HCT116 (cell line): ENCODE measurements at regions of chr7 and their contacts with region 1.

Region 1: DNA sequence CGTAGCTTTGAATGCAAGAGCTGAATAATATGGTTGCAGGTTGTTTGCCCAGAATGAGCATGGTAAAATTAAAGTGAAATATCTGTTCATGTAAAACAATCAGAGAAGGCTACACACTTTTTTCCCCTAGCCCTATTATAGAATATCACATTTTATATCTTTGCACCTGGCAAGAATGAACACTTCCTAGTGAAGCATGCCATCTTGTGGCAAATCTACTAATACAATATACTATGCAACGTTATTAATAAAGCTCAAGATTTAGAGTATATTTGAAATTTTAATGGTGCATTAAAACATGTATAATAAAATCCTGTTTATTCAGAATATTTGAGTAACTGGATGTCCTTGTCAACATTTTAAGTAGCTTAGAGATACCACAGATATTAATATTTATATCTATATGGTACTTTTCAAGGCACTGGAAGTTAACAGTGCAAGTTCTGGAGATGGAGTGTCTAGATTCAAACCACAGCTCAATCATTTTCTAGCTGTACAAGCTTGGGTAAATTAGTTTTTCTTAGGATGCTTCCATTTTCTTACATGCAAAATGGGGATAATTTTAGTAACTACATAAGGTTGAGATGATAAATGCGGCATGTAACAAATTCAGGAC is 643.1 kb upstream of the SEMA3D start:
- DNase-seq: no peak
- ATAC-seq: peak; percentile 63
- H3K4me3 ChIP-seq: no peak overlapping the region
- H3K27ac ChIP-seq: no peak overlapping the region
- H3K4me1 ChIP-seq: no peaks in the 10 kb centered on the region
- H3K27me3 ChIP-seq: no peaks in the 10 kb centered on the region
- CTCF ChIP-seq: peak; percentile 12 to 55 (median 49); a peak in 4 of 6 replicates
- POLR2A ChIP-seq: no peak
- RAD21 ChIP-seq: peak; percentile 70

Region 2: GRCh38 chr7:83936056-83936708 is 1893.7 kb before region 1 on chr7:
- CTCF ChIA-PET with region 1: interaction called, 10 read pairs
- POLR2A ChIA-PET with region 1: no interaction called
- RAD21 ChIA-PET with region 1: no interaction called
- intact Hi-C with region 1: no loop called
- DNase-seq: peak; percentile 69
- ATAC-seq: peak; percentile 87
- H3K4me3 ChIP-seq: no peak overlapping the region
- H3K27ac ChIP-seq: no peak overlapping the region
- H3K4me1 ChIP-seq: no peaks in the 10 kb centered on the region
- H3K27me3 ChIP-seq: no peaks in the 10 kb centered on the region
- CTCF ChIP-seq: peak; percentile 81 to 92 (median 89)
- POLR2A ChIP-seq: no peak
- RAD21 ChIP-seq: peak; percentile 91

Region 3: GRCh38 chr7:84985073-84985784 is 844.7 kb before region 1 on chr7:
- CTCF ChIA-PET with region 1: no interaction called
- POLR2A ChIA-PET with region 1: no interaction called
- RAD21 ChIA-PET with region 1: no interaction called
- intact Hi-C with region 1: no loop called
- DNase-seq: no peak
- ATAC-seq: no peak
- H3K4me3 ChIP-seq: no peak overlapping the region
- H3K27ac ChIP-seq: no peak overlapping the region
- H3K4me1 ChIP-seq: no peaks in the 10 kb centered on the region
- H3K27me3 ChIP-seq: no peaks in the 10 kb centered on the region
- CTCF ChIP-seq: 0 out of 6 replicates have a peak, but pooled peaks of 1 of the 3 experiments have one; percentile 13
- POLR2A ChIP-seq: no peak
- RAD21 ChIP-seq: no peak

Region 4: GRCh38 chr7:85030893-85031292 is 799.0 kb before region 1 on chr7:
- CTCF ChIA-PET with region 1: interaction called, 58 read pairs
- POLR2A ChIA-PET with region 1: interaction called, 3 read pairs
- RAD21 ChIA-PET with region 1: interaction called in 1 of 2 experiments, 4 read pairs
- intact Hi-C with region 1: loop called (anchors 1 kb)
- DNase-seq: peak; percentile 26
- ATAC-seq: peak; percentile 67
- H3K4me3 ChIP-seq: no peak overlapping the region
- H3K27ac ChIP-seq: no peak overlapping the region
- H3K4me1 ChIP-seq: no peaks in the 10 kb centered on the region
- H3K27me3 ChIP-seq: no peaks in the 10 kb centered on the region
- CTCF ChIP-seq: peak; percentile 25 to 68 (median 56); a peak in 4 of 6 replicates
- POLR2A ChIP-seq: no peak
- RAD21 ChIP-seq: peak; percentile 66

Region 5: GRCh38 chr7:85041605-85042216 is 788.2 kb before region 1 on chr7:
- CTCF ChIA-PET with region 1: interaction called, 71 read pairs
- POLR2A ChIA-PET with region 1: no interaction called
- RAD21 ChIA-PET with region 1: interaction called, 3 to 7 read pairs
- intact Hi-C with region 1: loop called (anchors 2 kb)
- DNase-seq: peak; percentile 62
- ATAC-seq: peak; percentile 89
- H3K4me3 ChIP-seq: no peak overlapping the region
- H3K27ac ChIP-seq: no peak overlapping the region
- H3K4me1 ChIP-seq: no peaks in the 10 kb centered on the region
- H3K27me3 ChIP-seq: no peaks in the 10 kb centered on the region
- CTCF ChIP-seq: peak; percentile 64 to 87 (median 77)
- POLR2A ChIP-seq: no peak
- RAD21 ChIP-seq: peak; percentile 88

Region 6: DNA sequence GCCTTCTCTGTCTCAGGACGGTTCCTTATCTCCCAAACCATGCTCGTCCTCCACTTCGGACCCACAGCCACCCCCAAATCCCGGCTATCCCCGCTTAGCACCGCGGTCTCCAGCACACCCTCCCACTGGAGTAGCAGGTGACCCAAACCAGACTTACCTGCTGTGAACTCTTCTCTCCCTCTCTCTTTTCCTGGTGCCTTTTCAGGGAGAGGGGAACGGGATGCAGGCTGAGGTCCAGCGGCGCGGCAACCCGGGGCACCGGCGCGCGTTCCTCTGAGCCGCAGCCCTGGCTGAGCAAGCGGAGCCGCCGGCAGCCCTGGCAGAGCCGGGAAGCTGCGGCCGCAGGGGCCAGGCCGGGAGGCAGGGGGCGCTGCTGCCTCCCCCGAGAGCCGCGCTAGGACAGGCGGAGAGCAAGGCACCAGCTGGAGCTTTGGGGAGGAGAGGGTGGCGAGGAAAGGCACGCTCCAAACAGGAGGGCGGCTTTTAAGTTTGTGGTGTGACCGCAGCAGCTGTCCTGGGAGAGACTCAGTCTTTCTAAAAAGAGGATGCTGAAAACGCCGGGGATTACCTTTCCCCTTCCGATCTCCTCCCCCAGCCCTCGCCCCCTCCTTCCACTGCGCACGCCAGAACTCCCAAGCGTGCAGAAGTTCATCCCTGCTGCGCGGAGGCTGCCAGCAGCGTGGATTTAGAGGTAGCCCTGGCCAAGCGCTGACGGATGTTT is 643.2 kb before region 1 on chr7 and contains the start of gene SEMA3D:
- CTCF ChIA-PET with region 1: interaction called, 5 read pairs
- POLR2A ChIA-PET with region 1: no interaction called
- RAD21 ChIA-PET with region 1: no interaction called
- intact Hi-C with region 1: loop called (anchors 10 kb)
- DNase-seq: peak; percentile 48
- ATAC-seq: peak; percentile 97
- H3K4me3 ChIP-seq: peak within 1 kb of the TSS; percentile 62 to 66
- H3K27ac ChIP-seq: no peak within 1 kb of the TSS; the same call in 1 of the 2 replicates
- H3K4me1 ChIP-seq: peaks cover 5 to 8% of the 10 kb centered on the region in 2 experiments; a peak in 3 of 4 replicates
- H3K27me3 ChIP-seq: no peaks in the 10 kb centered on the region
- CTCF ChIP-seq: peak; percentile 44 to 93 (median 82); a peak in 5 of 6 replicates
- POLR2A ChIP-seq: no peak
- RAD21 ChIP-seq: peak; percentile 63
- total RNA-seq, gene SEMA3D: 1.4 TPM

Region 7: DNA sequence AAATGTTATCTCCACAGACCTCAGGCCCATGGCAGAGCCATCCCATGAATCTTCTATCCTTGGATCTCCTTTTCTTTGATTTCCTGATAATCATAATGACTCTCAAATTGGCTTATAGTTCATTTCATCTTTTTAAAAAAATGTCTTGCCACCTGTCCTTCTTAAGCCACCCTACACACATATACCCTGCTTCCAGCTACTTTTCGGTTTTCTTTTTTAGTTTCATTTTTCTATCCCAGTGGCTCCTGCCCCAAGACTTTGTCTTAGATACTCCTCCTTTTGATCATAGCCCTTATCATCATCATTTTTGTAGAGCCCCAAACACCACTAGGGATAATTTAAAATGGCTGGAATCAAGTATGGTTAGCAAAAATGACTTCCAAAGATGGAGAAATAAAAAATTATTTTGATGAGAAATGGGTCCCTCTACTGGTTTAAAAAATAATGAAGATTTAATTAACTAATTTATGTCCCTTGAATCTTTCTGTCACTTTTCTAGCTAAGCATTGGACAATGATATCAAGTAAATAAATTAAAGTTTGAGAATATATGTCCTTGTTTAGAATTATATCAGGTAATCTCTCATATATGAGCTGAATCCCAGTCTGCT is 365.8 kb before region 1 on chr7:
- CTCF ChIA-PET with region 1: interaction called, 8 read pairs
- POLR2A ChIA-PET with region 1: no interaction called
- RAD21 ChIA-PET with region 1: no interaction called
- intact Hi-C with region 1: loop called (anchors 10 kb)
- DNase-seq: no peak
- ATAC-seq: no peak
- H3K4me3 ChIP-seq: no peak overlapping the region
- H3K27ac ChIP-seq: no peak overlapping the region
- H3K4me1 ChIP-seq: no peaks in the 10 kb centered on the region
- H3K27me3 ChIP-seq: no peaks in the 10 kb centered on the region
- CTCF ChIP-seq: peak in 1 of 3 experiments; percentile 26; a peak in 2 of 6 replicates
- POLR2A ChIP-seq: no peak
- RAD21 ChIP-seq: no peak

Region 8: DNA sequence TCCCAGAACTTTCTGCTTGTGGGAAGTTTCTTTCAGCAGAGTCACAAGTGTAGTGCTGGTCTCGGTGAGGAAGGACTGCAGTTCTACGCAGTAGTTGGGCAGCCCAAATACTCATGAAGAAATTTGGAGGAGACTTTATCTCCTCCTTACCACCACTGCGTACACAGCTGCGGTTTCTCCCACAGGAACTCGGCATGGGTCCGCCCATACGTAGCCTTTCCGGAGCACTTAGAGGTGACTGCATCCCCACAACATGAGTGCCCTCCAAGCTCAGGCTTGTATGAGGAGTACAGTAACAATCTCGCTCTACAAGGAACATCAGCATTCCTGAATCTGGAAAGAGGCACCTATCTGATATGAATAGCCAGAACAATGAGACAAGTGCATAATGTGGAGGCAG is 93.8 kb before region 1 on chr7:
- CTCF ChIA-PET with region 1: no interaction called
- POLR2A ChIA-PET with region 1: no interaction called
- RAD21 ChIA-PET with region 1: no interaction called
- intact Hi-C with region 1: no loop called
- DNase-seq: no peak
- ATAC-seq: no peak
- H3K4me3 ChIP-seq: no peak overlapping the region
- H3K27ac ChIP-seq: no peak overlapping the region
- H3K4me1 ChIP-seq: no peaks in the 10 kb centered on the region
- H3K27me3 ChIP-seq: no peaks in the 10 kb centered on the region
- CTCF ChIP-seq: no peak
- POLR2A ChIP-seq: no peak
- RAD21 ChIP-seq: no peak

Region 9: DNA sequence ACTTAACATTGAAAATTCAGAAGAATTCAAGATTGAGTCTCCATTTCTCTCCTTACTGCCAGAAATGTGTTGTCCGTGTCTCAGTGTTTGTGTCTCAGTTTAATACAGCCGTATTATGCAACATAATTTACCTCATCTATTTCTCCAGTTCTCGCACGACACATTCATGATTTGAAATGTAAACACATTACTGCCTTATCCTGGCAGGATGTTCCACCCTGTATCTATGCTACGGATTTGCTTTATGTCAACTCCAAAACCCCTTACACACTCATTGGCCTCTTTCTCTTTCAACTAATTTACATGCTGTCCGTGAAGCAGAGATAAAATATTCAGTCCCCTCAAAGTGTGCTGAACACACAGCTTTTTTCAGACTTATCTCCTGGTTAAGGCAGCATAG is 10.6 kb after region 1 on chr7:
- CTCF ChIA-PET with region 1: interaction called, 35 read pairs
- POLR2A ChIA-PET with region 1: interaction called, 3 read pairs
- RAD21 ChIA-PET with region 1: no interaction called
- intact Hi-C with region 1: no loop called
- DNase-seq: no peak
- ATAC-seq: no peak
- H3K4me3 ChIP-seq: no peak overlapping the region
- H3K27ac ChIP-seq: no peak overlapping the region
- H3K4me1 ChIP-seq: no peaks in the 10 kb centered on the region
- H3K27me3 ChIP-seq: no peaks in the 10 kb centered on the region
- CTCF ChIP-seq: no peak
- POLR2A ChIP-seq: no peak
- RAD21 ChIP-seq: no peak

Region 10: GRCh38 chr7:85897967-85898366 is 68.0 kb after region 1 on chr7:
- CTCF ChIA-PET with region 1: no interaction called
- POLR2A ChIA-PET with region 1: no interaction called
- RAD21 ChIA-PET with region 1: no interaction called
- intact Hi-C with region 1: no loop called
- DNase-seq: no peak
- ATAC-seq: no peak
- H3K4me3 ChIP-seq: no peak overlapping the region
- H3K27ac ChIP-seq: no peak overlapping the region
- H3K4me1 ChIP-seq: no peaks in the 10 kb centered on the region
- H3K27me3 ChIP-seq: no peaks in the 10 kb centered on the region
- CTCF ChIP-seq: no peak
- POLR2A ChIP-seq: no peak
- RAD21 ChIP-seq: no peak

Region 11: GRCh38 chr7:86914551-86914950 is 1084.6 kb after region 1 on chr7:
- CTCF ChIA-PET with region 1: no interaction called
- POLR2A ChIA-PET with region 1: no interaction called
- RAD21 ChIA-PET with region 1: no interaction called
- intact Hi-C with region 1: no loop called
- DNase-seq: no peak
- ATAC-seq: no peak
- H3K4me3 ChIP-seq: no peak overlapping the region
- H3K27ac ChIP-seq: no peak overlapping the region
- H3K4me1 ChIP-seq: no peaks in the 10 kb centered on the region
- H3K27me3 ChIP-seq: no peaks in the 10 kb centered on the region
- CTCF ChIP-seq: peak; percentile 44 to 70 (median 53); a peak in 5 of 6 replicates
- POLR2A ChIP-seq: no peak
- RAD21 ChIP-seq: peak; percentile 40